ENCODE measurements at regions of chr10 and their contacts with region 1.

Region 1: DNA sequence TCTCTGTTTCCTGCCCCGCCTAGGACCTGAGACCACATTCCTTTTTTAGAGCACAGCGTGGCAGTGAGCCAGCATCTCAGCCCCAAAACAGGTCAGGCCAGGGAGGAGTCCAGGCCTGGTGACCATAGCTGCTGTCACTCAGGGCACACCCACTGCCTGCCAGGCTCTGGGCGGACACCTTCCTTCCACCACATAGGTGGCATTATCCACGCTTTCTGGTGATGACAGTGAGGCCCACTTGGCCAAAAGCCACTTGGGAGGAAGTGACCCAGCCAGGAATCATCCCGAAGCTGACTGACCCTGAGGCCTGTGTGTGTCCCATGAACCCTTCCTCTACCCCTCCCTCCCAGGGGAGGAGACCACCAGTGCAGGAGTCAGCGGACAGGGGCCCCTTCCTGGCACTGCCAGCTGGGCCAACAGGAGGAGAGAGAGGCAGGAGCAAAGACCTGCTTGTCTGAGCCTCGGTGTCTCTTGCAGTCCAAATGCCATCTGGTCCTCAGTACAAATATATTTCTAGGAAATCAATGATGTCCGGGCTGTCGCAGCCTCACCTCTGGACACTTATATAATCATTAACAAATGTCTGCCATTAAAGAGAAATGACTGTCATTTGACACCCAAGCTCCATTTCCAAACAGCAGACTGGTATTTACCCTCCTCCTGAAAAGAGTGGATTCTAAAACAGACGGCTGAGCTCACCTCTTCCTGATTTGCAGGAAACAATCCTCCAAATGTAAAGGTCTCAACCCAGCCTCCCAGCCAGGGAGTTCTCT is 63.0 kb downstream of the ABRAXAS2 start:
- DNase-seq: no peak
- ATAC-seq: no peak
- H3K4me3 ChIP-seq: no peak overlapping the region
- H3K27ac ChIP-seq: no peak overlapping the region
- H3K4me1 ChIP-seq: no peaks in the 10 kb centered on the region
- H3K27me3 ChIP-seq: no peaks in the 10 kb centered on the region
- CTCF ChIP-seq: no peak

Region 2: GRCh38 chr10:124827474-124827873 is 37.1 kb before region 1 on chr10:
- CTCF ChIA-PET with region 1: interaction called, 3 read pairs
- POLR2A ChIA-PET with region 1: interaction called, 12 read pairs
- in situ Hi-C with region 1: no loop called
- intact Hi-C with region 1: no loop called
- DNase-seq: no peak
- ATAC-seq: no peak
- H3K4me3 ChIP-seq: no peak overlapping the region
- H3K27ac ChIP-seq: no peak overlapping the region
- H3K4me1 ChIP-seq: no peaks in the 10 kb centered on the region
- H3K27me3 ChIP-seq: no peaks in the 10 kb centered on the region
- CTCF ChIP-seq: peak; percentile 74; the same call in 1 of the 2 replicates

Region 3: DNA sequence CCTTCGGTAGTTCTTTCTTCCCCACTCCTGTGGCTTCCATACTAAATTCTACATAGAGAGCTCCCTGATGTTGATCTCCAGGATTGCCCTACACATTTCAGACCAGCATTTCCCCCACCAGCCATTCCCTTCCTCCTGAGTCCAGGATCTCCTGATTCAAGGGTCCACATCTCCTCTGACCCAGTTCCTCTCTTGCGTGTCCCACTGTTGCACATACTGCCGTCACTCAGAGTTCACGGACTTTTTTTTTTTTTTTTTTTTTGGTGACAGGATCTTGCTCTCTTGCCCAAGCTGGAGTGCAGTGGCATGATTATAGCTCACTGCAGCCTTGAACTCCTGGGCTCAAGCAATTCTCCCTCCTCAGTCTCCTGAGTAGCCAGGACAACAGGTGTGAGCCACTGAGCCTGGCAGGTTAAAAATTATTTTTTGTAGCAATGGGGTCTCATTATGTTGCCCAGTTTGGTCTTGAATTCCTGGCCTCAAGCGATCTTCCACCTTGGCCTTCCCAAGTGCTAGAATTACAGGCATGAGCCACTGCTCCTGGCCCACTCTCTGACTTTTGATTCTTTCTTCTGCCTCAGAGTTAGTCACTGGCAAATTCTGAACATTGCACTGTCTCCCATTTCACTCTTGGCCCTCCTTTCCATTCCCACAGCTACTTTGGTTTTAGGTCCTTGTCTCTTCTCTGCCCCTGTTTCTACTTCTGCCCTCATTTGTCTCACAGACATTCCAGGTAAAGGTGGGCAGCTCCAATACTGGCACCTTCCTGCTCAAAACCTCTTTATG is 47.7 kb after region 1 on chr10:
- CTCF ChIA-PET with region 1: no interaction called
- POLR2A ChIA-PET with region 1: interaction called, 10 read pairs
- in situ Hi-C with region 1: no loop called
- intact Hi-C with region 1: no loop called
- DNase-seq: no peak
- ATAC-seq: no peak
- H3K4me3 ChIP-seq: no peak overlapping the region
- H3K27ac ChIP-seq: no peak overlapping the region
- H3K4me1 ChIP-seq: peaks cover 11% of the 10 kb centered on the region; the same call in 1 of the 2 replicates
- H3K27me3 ChIP-seq: no peaks in the 10 kb centered on the region
- CTCF ChIP-seq: no peak

Region 4: GRCh38 chr10:124943301-124944092 is 78.9 kb after region 1 on chr10:
- CTCF ChIA-PET with region 1: no interaction called
- POLR2A ChIA-PET with region 1: no interaction called
- in situ Hi-C with region 1: no loop called
- intact Hi-C with region 1: no loop called
- DNase-seq: peak; percentile 83
- ATAC-seq: peak; percentile 43; the same call in 1 of the 2 replicates
- H3K4me3 ChIP-seq: no peak overlapping the region
- H3K27ac ChIP-seq: no peak overlapping the region
- H3K4me1 ChIP-seq: peaks cover 15% of the 10 kb centered on the region
- H3K27me3 ChIP-seq: no peaks in the 10 kb centered on the region
- CTCF ChIP-seq: no peak

Region 5: DNA sequence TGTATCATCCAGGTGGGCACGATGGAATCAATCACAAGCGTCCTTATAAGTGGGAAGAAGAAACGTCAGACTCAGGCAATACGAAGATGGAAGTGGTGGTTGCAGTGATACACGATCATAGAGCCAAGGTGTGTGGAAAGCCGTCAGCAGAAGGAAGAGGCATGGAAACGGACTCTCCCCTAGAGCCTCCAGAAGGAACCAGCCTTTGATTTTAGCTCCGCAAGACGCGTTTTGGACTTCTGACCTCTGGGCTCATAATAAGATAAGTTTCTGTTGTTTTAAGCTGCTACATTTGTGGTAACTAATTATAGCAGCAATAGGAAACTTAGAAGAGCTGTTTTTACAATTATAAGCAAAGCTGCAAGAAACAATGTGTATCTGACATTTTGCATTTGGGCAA is 1046.5 kb after region 1 on chr10:
- CTCF ChIA-PET with region 1: no interaction called
- POLR2A ChIA-PET with region 1: no interaction called
- in situ Hi-C with region 1: no loop called
- intact Hi-C with region 1: no loop called
- DNase-seq: no peak
- ATAC-seq: no peak
- H3K4me3 ChIP-seq: no peak overlapping the region
- H3K27ac ChIP-seq: no peak overlapping the region
- H3K4me1 ChIP-seq: no peaks in the 10 kb centered on the region; the same call in 1 of the 2 replicates
- H3K27me3 ChIP-seq: no peaks in the 10 kb centered on the region
- CTCF ChIP-seq: no peak

Measured in Panc1 (cell line).